Aorta (tissue), 5 donors: ENCODE measurements at regions of chr1 and their contacts with region 1.

Region 1: DNA sequence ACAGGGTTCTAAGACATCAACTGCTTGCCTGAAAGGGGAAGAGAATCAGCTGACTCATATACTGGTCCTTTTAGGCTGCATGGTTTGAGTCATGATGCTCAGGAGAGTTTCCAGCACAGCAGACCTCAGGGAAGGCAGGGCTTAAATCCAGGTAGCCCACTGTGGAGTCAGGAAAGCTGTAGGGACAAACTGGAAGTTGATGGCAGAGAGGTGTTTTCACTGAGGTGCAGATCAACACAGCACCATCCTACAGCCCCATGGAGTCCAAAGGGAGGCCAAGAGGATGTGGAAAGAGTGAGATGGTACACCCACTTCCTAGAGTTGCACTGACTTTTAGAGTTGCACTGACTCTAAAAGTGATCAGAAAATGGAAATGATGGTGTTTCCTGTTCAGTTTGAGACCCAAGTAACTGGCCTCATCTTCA is 252.4 kb upstream of the DUSP10 start:
- DNase-seq: no peak
- ATAC-seq: no peak
- H3K4me3 ChIP-seq: no peak overlapping the region
- H3K27ac ChIP-seq: peak overlapping the region in 1 of 2 donors; percentile 43
- H3K4me1 ChIP-seq: peaks cover 9% of the 10 kb centered on the region in 2 donors
- H3K27me3 ChIP-seq: no peaks in the 10 kb centered on the region

Region 2: GRCh38 chr1:221741711-221742554 is 252.4 kb before region 1 on chr1 and contains the start of gene DUSP10:
- intact Hi-C with region 1: loop called in 1 of 2 experiments (anchors 10 kb)
- DNase-seq: peak; percentile 99
- ATAC-seq: peak; percentile 98
- H3K4me3 ChIP-seq: peak within 1 kb of the TSS; percentile 77 to 90
- H3K27ac ChIP-seq: peak within 1 kb of the TSS; percentile 94 to 95
- H3K4me1 ChIP-seq: no peaks in the 10 kb centered on the region
- H3K27me3 ChIP-seq: no peaks in the 10 kb centered on the region
- total RNA-seq, gene DUSP10: 4.2 to 5.3 TPM

Region 3: GRCh38 chr1:221776495-221777301 is 217.6 kb before region 1 on chr1:
- intact Hi-C with region 1: no loop called
- DNase-seq: no peak
- ATAC-seq: no peak
- H3K4me3 ChIP-seq: no peak overlapping the region
- H3K27ac ChIP-seq: no peak overlapping the region
- H3K4me1 ChIP-seq: no peaks in the 10 kb centered on the region
- H3K27me3 ChIP-seq: no peaks in the 10 kb centered on the region

Region 4: DNA sequence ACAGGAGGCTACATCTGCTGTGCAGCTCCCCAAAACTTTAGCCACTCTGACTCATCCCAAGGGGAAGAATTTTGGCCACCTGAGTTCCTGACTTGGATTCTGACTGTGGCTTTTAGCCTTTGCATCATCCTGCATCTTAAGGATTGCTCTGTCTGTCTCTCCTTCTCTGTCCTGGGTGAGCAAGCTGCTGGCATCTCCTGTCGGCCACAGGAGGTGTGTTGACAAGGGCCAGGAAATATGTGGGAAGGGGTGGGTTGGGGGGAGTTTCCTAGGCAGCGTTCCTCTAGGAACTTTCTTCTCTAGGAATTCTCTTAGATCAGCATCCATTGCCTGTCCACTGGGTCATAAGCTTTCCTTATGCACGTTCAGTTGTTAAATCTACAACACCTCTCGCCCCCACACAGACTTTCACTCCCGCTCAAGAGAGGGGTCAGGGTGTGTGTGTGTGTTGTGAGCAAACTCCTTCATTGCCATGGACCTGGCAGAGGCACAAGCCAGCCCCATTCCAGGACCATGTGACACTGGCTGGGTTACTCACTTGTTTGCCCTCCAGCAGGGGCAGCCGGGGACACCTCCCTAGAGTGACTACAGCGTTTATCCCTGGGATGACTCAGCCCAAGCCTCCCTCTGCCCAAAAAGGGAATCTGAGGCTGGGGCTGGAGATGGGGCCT is 107.4 kb before region 1 on chr1:
- intact Hi-C with region 1: loop called in 1 of 2 experiments (anchors 10 kb)
- DNase-seq: peak; percentile 82 to 91
- ATAC-seq: peak; percentile 77
- H3K4me3 ChIP-seq: no peak overlapping the region
- H3K27ac ChIP-seq: no peak overlapping the region
- H3K4me1 ChIP-seq: peaks cover 0 to 6% of the 10 kb centered on the region in 2 donors
- H3K27me3 ChIP-seq: no peaks in the 10 kb centered on the region

Region 5: DNA sequence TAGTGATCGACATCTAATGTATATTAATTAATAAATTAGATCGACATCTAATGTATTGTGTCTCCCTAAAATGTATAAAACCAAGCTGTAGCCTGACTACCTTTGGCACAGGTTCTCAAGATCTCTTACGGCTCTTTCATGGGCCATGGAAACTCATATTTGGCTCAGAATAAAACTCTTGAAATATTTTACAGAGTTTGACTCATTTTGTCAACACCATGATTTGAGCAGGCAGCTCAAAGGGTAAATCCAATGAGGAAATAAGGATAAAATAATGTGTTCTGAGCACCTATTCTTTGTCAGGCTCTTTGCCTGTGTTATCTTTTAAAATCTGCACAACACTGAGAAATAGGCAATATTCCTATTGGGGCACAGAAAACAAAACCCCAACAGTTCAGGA is 29.0 kb before region 1 on chr1:
- intact Hi-C with region 1: loop called in 1 of 2 experiments (anchors 1 kb)
- DNase-seq: no peak
- ATAC-seq: no peak
- H3K4me3 ChIP-seq: no peak overlapping the region
- H3K27ac ChIP-seq: no peak overlapping the region
- H3K4me1 ChIP-seq: no peaks in the 10 kb centered on the region
- H3K27me3 ChIP-seq: no peaks in the 10 kb centered on the region